ENCODE measurements at regions of chr6 and their contacts with region 1.

Region 1: DNA sequence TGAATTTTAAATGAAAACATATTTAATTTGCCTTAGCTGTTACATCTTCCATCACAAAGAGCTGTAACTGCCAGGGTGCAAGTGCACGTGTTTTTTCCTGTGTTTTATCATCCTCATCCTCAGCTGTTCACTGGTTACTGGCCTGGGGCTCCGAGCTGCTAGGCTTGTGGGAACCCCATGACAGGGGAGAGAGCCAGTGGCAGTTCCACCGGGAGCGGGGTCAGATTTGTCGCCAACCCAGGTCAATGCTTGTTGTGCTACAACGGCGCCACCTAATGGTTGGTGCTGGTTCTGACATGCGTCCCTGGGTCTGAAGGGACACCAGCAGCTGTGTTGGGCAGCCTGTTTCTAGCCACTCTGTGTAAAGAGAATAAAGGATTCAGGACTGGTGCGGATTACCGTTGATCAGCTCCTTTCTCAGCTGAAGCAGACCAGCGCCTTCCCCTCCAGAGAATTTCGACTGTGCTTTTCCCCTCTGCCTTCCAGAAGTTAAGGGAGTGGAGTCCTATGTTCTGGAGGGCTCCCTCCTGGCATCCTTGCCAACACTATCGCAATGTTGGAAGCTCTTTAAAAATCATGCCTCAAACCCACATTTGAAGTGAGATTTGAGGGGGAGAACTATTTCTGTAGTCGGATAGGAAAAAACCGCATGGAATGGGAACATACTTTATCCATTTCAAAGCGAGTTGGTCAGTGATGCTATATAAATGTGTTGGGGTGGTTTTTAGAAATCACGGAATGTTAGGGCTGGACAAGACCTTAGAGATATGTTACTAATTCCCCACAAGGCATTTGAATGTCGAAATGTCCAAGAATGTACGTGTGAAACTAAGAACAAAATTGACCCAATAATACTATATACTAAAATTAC is 32.1 kb downstream of the SUMO4 start:
- DNase-seq: peak; percentile 93
- H3K4me3 ChIP-seq: no peak overlapping the region
- H3K27ac ChIP-seq: peak overlapping the region in 1 of 4 donors; percentile 42
- H3K4me1 ChIP-seq: peaks cover 0 to 16% (median 3%) of the 10 kb centered on the region in 4 donors
- H3K27me3 ChIP-seq: no peaks in the 10 kb centered on the region
- CTCF ChIP-seq: peak; percentile 94 to 97 (median 96)
- EP300 ChIP-seq: no peak
- POLR2A ChIP-seq: no peak

Region 2: DNA sequence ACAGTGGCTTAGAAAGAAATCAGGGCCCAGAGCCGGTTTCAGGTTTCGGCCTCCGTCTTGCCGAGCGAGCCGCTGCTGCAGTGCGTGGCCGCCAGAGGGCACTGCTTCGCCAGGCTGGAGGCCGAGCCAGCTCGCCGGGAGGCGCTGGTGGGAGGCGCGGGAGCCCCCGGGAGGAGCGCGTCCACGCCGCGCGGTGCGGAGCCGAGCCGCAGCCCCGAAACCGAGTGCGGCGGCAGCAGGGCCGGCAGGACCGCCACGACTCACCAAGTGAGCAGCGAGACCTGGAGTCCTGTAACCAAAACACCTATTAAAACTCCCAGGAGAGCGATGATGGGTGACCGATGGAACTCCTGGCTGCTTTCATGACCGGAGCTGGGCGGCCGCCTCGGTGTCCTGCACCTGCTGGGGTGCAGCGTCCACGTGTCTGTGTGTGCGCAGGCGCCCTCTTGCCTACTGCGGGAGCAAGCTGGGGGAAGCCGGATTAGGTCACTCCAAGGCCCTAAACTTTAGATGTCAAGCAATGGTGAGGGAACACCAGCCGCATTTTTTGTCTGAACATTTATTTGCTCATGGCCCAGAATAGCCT is 872.2 kb before region 1 on chr6:
- in situ Hi-C with region 1: loop called in 1 of 4 experiments (anchors 25 kb)
- intact Hi-C with region 1: no loop called
- DNase-seq: peak; percentile 74
- H3K4me3 ChIP-seq: peak overlapping the region in 3 of 4 donors; percentile 25 to 54 (median 35)
- H3K27ac ChIP-seq: peak overlapping the region in 1 of 4 donors; percentile 33
- H3K4me1 ChIP-seq: peaks cover 0 to 11% (median 3%) of the 10 kb centered on the region in 4 donors
- H3K27me3 ChIP-seq: no peaks in the 10 kb centered on the region
- CTCF ChIP-seq: peak; percentile 74 to 98 (median 96)
- EP300 ChIP-seq: no peak
- POLR2A ChIP-seq: no peak

Region 3: DNA sequence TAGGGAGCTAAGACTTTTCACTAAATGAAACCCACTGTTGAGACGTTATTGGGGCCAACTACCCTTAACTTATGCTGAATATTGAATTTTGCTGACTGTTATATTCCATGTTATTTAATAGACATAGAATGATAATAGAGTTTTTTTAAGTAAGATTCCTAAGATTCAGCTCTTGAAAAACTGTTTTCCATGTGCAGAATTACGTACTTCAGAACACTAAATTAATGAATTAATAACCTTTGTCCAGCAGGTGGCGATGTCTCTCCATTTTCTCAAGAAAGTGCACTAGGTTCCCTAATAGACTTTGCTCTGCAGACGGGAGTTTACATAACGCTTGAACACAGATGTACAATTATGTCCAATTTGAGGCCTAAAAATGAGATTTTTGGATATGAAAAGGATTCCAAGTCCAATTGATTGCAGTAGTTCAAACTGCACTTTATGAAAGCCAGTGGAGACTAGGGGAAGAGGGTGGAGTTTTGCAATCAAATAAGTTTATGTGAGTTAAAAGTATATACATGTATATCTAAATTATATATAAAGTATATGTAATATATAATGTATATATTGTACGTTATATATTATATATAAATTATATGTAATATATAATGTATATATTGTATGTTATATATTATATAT is 403.3 kb before region 1 on chr6:
- in situ Hi-C with region 1: loop called in 3 of 4 experiments (anchors 5 to 10 kb)
- intact Hi-C with region 1: loop called (anchors 5 kb)
- DNase-seq: peak; percentile 64
- H3K4me3 ChIP-seq: no peak overlapping the region
- H3K27ac ChIP-seq: no peak overlapping the region
- H3K4me1 ChIP-seq: peaks cover 0 to 13% (median 9%) of the 10 kb centered on the region in 4 donors
- H3K27me3 ChIP-seq: no peaks in the 10 kb centered on the region
- CTCF ChIP-seq: peak; percentile 71 to 91 (median 76)
- EP300 ChIP-seq: no peak
- POLR2A ChIP-seq: no peak

Region 4: DNA sequence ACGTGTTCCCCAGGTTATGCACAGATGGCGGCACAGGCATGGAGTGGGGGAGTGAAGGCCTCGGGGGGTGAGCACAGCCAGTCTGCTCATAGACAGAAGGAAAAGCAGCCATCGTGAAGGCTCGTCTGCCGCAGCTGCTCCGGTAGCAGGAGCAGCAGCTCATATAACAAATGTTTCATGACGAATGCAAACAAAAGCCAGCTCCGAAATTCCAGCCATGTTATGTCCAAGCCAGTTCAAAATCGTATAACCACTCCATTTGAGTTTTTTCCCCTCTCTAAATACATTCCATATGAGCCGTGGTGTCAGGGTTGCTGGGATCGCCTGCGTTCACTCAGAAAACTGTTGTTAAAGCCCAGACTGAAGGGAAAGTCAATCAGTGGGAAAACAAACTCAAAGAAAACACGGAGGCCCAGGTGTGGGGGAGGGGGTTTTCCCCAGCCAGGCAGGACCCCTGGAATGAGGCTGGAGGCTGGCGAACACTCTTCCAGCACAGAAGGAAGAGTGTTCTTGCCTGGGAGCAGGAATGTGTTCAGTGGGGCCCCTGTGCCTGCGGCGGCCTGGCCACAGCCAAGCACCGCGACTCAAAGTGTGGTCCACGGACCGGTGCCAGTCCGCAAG is 395.0 kb before region 1 on chr6:
- in situ Hi-C with region 1: loop called in 3 of 4 experiments (anchors 5 to 10 kb)
- intact Hi-C with region 1: loop called (anchors 5 kb)
- DNase-seq: no peak
- H3K4me3 ChIP-seq: no peak overlapping the region
- H3K27ac ChIP-seq: peak overlapping the region in 2 of 4 donors; percentile 43 to 58
- H3K4me1 ChIP-seq: peaks cover 0 to 7% (median 5%) of the 10 kb centered on the region in 4 donors
- H3K27me3 ChIP-seq: no peaks in the 10 kb centered on the region
- CTCF ChIP-seq: no peak
- EP300 ChIP-seq: no peak
- POLR2A ChIP-seq: no peak

Region 5: GRCh38 chr6:149082286-149082707 is 349.8 kb before region 1 on chr6:
- in situ Hi-C with region 1: loop called (anchors 5 to 10 kb)
- intact Hi-C with region 1: loop called (anchors 5 kb)
- DNase-seq: peak; percentile 87
- H3K4me3 ChIP-seq: no peak overlapping the region
- H3K27ac ChIP-seq: no peak overlapping the region
- H3K4me1 ChIP-seq: peaks cover 4 to 25% (median 8%) of the 10 kb centered on the region in 4 donors
- H3K27me3 ChIP-seq: no peaks in the 10 kb centered on the region
- CTCF ChIP-seq: peak; percentile 76 to 82 (median 80)
- EP300 ChIP-seq: no peak
- POLR2A ChIP-seq: no peak

Region 6: GRCh38 chr6:149190224-149190831 is 241.8 kb before region 1 on chr6:
- in situ Hi-C with region 1: loop called in 2 of 4 experiments (anchors 25 kb)
- intact Hi-C with region 1: no loop called
- DNase-seq: peak; percentile 74
- H3K4me3 ChIP-seq: no peak overlapping the region
- H3K27ac ChIP-seq: no peak overlapping the region
- H3K4me1 ChIP-seq: no peaks in the 10 kb centered on the region
- H3K27me3 ChIP-seq: no peaks in the 10 kb centered on the region
- CTCF ChIP-seq: peak in 4 of 5 experiments; percentile 26 to 40 (median 29)
- EP300 ChIP-seq: no peak
- POLR2A ChIP-seq: no peak

Region 7: GRCh38 chr6:149513915-149514314 is 81.8 kb after region 1 on chr6:
- in situ Hi-C with region 1: loop called in 1 of 4 experiments (anchors 10 kb)
- intact Hi-C with region 1: no loop called
- DNase-seq: no peak
- H3K4me3 ChIP-seq: no peak overlapping the region
- H3K27ac ChIP-seq: no peak overlapping the region
- H3K4me1 ChIP-seq: peaks cover 0 to 8% (median 4%) of the 10 kb centered on the region in 4 donors
- H3K27me3 ChIP-seq: no peaks in the 10 kb centered on the region
- CTCF ChIP-seq: no peak
- EP300 ChIP-seq: no peak
- POLR2A ChIP-seq: no peak

Region 8: DNA sequence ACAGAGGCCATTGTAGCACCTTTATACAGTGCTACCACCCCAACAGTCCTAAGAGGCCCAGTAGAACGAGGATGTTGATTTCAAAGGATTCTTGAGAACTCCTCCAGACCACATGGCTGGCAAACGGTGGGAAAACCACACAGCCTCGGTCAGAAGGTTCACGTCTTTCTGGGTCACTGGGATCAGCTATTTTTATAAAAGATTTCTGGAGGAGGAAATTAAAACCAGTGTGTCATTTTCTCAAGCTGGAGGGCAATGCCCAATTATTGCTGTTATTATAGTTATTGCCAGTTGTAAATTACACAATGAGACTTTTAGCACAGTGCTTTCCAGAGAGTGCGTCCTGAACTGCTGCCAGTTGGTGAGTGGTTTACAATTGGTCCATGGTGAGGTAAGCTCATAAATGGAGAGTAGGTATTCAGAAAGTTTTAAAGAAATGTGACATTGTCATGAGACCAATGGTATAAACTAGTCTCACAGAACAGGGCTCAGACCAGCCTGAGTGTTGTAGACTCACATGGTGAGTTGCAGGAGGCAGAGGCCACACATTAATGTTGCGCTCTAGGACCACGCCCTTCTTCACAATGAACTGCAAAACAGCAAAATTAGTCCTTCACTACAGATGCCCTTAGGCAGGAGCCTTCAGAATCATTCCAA is 702.3 kb after region 1 on chr6:
- in situ Hi-C with region 1: no loop called
- intact Hi-C with region 1: no loop called
- DNase-seq: peak; percentile 85
- H3K4me3 ChIP-seq: no peak overlapping the region
- H3K27ac ChIP-seq: peak overlapping the region; percentile 68 to 84 (median 80)
- H3K4me1 ChIP-seq: peaks cover 0 to 29% (median 16%) of the 10 kb centered on the region in 4 donors
- H3K27me3 ChIP-seq: peaks cover 4% of the 10 kb centered on the region
- CTCF ChIP-seq: no peak
- EP300 ChIP-seq: no peak
- POLR2A ChIP-seq: peak; percentile 40

Measured in transverse colon (tissue), 4 donors.